K562 (cell line): ENCODE measurements at regions of chr20 and their contacts with region 1.

Region 1: DNA sequence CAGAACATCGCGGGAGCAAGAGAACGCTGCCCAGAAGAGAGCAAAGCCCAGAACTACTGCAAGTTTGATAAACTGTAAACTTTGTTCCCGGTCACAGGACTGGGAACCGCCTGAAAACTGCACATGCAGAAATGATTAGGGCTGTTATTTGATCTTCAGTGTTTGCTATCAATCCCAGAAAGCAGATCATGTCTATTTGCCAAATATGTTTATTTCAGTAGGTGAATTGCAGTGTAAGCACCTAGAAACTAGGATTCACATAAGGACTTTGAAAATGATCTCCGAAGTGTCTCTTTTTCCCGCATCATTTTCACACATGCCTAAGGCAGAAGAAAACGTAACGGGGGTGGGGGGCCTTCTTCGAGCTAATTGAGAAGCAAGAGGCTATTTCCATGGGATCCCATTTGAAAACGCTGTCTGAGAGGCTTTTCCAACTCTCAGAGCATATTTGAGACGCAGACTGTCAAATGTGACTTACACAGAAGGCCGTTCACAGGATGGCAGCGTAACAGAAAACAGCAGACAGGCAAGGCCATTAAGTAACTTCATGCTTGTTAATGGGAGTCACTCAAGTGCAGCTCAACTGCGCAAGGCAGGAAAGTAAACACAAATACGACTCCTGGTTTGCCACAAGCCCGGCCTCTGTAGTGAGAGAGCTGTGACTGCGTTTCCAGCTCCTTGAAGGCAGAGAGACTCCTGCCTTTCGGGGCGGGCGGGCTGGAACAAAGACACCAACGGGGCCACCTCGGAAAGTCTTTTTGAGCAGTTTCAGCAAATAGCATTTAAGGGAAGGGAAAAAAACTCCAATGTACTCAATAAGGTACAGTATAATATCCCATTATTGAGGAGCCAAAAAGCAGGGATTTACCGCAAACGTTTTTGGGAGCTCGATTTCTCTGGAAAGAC is 144.7 kb upstream of the ZNF217 start:
- DNase-seq: peak; percentile 35 to 86 (median 56)
- ATAC-seq: peak; percentile 73
- H3K4me3 ChIP-seq: 0 out of 2 replicates have a peak overlapping the region, but pooled peaks have one; percentile 1
- H3K27ac ChIP-seq: peak overlapping the region; percentile 83
- H3K4me1 ChIP-seq: peaks cover 7 to 40% of the 10 kb centered on the region in 2 experiments
- H3K27me3 ChIP-seq: no peaks in the 10 kb centered on the region
- CTCF ChIP-seq: no peak
- EP300 ChIP-seq: no peak
- POLR2A ChIP-seq: peak; percentile 63
- RAD21 ChIP-seq: peak in 1 of 2 experiments; percentile 15; a peak in 1 of 4 replicates

Region 2: DNA sequence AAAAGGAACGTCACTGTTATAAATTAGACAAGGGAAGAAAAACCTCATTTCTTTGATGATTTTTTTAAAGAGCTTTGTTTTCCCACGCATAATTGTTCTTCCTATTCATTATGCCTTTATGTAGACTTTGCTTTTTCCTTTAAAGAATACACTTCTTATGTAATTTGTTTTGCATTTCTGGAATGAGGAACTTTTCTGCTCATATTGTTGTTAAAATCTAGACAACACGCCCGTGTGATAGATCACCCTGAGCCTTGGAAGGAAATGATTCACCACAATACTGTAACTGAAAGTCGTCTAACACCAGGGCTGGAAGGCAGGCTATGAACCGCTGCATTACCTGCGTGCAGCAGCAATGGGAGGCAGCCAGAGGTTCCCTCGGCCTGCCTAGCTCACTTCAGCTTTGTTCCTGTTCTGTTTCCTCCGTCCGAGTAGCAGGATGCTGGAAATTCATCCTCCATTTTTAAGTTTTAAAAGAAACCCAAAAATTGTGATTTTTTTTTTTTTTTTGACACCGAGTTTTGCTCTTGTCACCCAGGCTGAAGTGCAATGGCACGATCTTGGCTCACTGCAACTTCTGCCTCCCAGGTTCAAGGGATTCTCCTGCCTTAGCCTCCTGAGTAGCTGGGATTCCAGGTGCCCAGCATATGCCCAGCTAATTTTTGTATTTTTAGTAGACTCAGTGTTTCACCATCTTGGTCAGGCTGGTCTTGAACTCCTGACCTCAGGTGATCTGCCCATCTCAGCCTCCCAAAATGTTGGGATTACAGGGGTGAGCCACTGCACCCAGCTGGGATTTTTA is 95.1 kb before region 1 on chr20:
- CTCF ChIA-PET with region 1: no interaction called
- POLR2A ChIA-PET with region 1: interaction called, 7 read pairs
- in situ Hi-C with region 1: no loop called
- intact Hi-C with region 1: loop called (anchors 5 kb)
- DNase-seq: peak; percentile 37 to 75 (median 52)
- ATAC-seq: peak; percentile 83
- H3K4me3 ChIP-seq: no peak overlapping the region; the same call in 1 of the 2 replicates
- H3K27ac ChIP-seq: peak overlapping the region; percentile 95
- H3K4me1 ChIP-seq: peaks cover 23 to 25% of the 10 kb centered on the region in 2 experiments
- H3K27me3 ChIP-seq: no peaks in the 10 kb centered on the region
- CTCF ChIP-seq: no peak
- EP300 ChIP-seq: peak; percentile 60; the same call in 1 of the 2 replicates
- POLR2A ChIP-seq: no peak; the same call in none of the 2 replicates
- RAD21 ChIP-seq: peak in 1 of 2 experiments; percentile 9; a peak in 1 of 4 replicates

Region 3: GRCh38 chr20:53722515-53723444 is 15.5 kb before region 1 on chr20:
- CTCF ChIA-PET with region 1: no interaction called
- POLR2A ChIA-PET with region 1: no interaction called
- in situ Hi-C with region 1: no loop called
- intact Hi-C with region 1: no loop called
- DNase-seq: peak in 1 of 4 experiments; percentile 3
- ATAC-seq: no peak
- H3K4me3 ChIP-seq: no peak overlapping the region
- H3K27ac ChIP-seq: no peak overlapping the region
- H3K4me1 ChIP-seq: no peaks in the 10 kb centered on the region; a peak in 1 of 5 replicates
- H3K27me3 ChIP-seq: no peaks in the 10 kb centered on the region
- CTCF ChIP-seq: no peak
- EP300 ChIP-seq: no peak
- POLR2A ChIP-seq: no peak
- RAD21 ChIP-seq: no peak

Region 4: GRCh38 chr20:53869466-53870258 is 131.4 kb after region 1 on chr20:
- CTCF ChIA-PET with region 1: no interaction called
- POLR2A ChIA-PET with region 1: no interaction called
- in situ Hi-C with region 1: no loop called
- intact Hi-C with region 1: loop called (anchors 10 kb)
- DNase-seq: peak; percentile 54 to 90 (median 64)
- ATAC-seq: peak; percentile 93
- H3K4me3 ChIP-seq: no peak overlapping the region
- H3K27ac ChIP-seq: peak overlapping the region; percentile 48
- H3K4me1 ChIP-seq: peaks cover 2 to 10% of the 10 kb centered on the region in 2 experiments; a peak in 3 of 5 replicates
- H3K27me3 ChIP-seq: no peaks in the 10 kb centered on the region
- CTCF ChIP-seq: peak; percentile 75 to 88 (median 85)
- EP300 ChIP-seq: no peak
- POLR2A ChIP-seq: no peak
- RAD21 ChIP-seq: peak; percentile 88 to 90